Testis (tissue), 5 donors: ENCODE measurements at regions of chr6 and their contacts with region 1.

Region 1: DNA sequence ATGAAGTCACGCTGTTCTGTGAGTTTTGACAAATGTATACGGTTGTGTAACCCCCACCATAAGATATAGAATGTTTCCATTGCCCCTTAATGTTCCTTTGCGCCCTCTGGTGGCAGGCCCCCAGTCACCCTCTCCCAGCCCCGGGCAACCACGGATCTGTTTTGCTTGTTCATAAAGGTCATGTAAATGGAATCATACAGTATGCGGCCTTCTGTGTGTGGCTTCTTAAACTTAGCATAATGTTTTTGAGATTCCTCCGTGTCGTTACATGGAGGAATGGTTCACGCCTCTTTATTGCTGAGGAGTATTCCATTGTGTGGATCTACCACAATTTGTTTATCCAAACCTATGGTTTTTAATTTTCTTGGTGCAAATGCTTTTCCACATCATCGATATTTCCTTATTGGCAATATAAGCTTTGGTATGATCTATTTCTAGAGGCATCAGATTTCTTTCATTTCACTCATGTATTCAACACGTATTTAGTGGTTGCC is 28.4 kb downstream of the LYRM2 start:
- DNase-seq: peak; percentile 68
- H3K4me3 ChIP-seq: no peak overlapping the region
- H3K27ac ChIP-seq: no peak overlapping the region
- H3K4me1 ChIP-seq: no peaks in the 10 kb centered on the region
- H3K27me3 ChIP-seq: no peaks in the 10 kb centered on the region
- CTCF ChIP-seq: peak; percentile 33 to 68 (median 36)
- POLR2A ChIP-seq: no peak

Region 2: DNA sequence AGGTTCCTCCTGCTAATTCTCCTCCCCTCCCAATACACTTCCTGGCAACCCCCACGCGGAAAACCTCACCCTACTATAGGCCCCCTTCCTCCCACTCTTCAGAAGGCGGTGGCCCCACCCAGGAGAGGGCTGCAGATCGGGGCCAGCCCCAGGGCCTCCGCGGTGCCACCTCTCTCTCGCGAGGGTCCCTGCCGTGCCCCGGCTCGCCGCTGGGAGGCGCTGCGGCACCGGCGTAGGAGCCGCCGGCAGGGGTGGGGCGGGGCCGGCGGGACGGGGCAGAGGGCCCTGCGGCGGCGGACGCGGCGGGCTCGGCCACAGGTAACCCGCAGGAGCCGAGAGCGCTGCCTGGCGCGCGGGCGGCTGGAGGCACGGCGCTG is 177.3 kb before region 1 on chr6 and contains the start of gene ANKRD6:
- intact Hi-C with region 1: loop called (anchors 10 kb)
- DNase-seq: peak; percentile 88
- H3K4me3 ChIP-seq: peak within 1 kb of the TSS; percentile 93 to 94
- H3K27ac ChIP-seq: peak within 1 kb of the TSS; percentile 72 to 83
- H3K4me1 ChIP-seq: peaks cover 12% of the 10 kb centered on the region
- H3K27me3 ChIP-seq: no peaks in the 10 kb centered on the region
- CTCF ChIP-seq: peak; percentile 86 to 95 (median 93)
- POLR2A ChIP-seq: no peak
- total RNA-seq, gene ANKRD6: 29.8 to 52.8 TPM